Lower leg skin (tissue), 4 donors: ENCODE measurements at regions of chr5 and their contacts with region 1.

Region 1: GRCh38 chr5:11459716-11460115 is 444.5 kb downstream of the CTNND2 start:
- DNase-seq: no peak
- H3K4me3 ChIP-seq: no peak overlapping the region
- CTCF ChIP-seq: no peak
- POLR2A ChIP-seq: no peak

Region 2: GRCh38 chr5:9498541-9499497 is 1960.9 kb before region 1 on chr5:
- intact Hi-C with region 1: no loop called
- DNase-seq: peak; percentile 47 to 62
- H3K4me3 ChIP-seq: no peak overlapping the region
- CTCF ChIP-seq: no peak
- POLR2A ChIP-seq: no peak

Region 3: DNA sequence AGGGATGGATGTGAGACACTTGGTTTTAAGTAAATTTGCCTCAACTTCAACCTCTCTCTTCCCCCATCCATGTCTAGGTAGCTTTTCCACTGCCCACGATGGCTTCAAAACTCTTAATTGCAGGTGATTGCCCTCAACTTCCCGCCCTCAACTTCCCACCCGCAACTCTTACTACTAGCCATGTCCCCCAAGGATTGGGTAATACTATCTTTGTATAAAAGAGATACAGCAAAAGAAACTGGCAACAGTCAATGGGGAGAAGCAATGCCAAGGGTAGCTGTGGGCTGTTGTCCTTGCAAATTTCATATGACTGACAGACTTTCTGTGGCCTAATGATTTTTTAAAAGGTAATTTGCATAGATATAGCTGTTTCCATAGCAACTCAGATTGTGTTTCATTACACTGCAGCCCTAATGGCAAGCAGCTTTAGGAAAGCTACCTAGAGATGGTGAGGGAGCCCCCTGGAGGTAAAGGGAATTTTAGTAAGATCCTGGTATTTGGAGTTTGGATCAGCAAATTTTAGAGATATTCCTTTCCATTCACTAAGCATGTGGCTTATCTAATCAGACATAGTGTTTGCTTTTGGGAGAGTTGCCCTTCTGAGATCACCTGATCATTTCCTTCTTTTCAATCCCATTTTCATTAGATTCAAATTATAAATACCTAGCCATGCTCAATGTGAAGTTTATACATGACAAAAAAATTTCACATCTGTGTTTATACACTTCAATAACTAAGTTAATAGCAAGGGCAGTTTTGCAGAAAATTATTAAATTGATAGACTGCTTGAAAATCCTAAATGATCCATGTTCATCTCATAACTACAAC is 277.1 kb before region 1 on chr5:
- intact Hi-C with region 1: no loop called
- DNase-seq: no peak
- H3K4me3 ChIP-seq: no peak overlapping the region
- CTCF ChIP-seq: no peak
- POLR2A ChIP-seq: no peak

Region 4: DNA sequence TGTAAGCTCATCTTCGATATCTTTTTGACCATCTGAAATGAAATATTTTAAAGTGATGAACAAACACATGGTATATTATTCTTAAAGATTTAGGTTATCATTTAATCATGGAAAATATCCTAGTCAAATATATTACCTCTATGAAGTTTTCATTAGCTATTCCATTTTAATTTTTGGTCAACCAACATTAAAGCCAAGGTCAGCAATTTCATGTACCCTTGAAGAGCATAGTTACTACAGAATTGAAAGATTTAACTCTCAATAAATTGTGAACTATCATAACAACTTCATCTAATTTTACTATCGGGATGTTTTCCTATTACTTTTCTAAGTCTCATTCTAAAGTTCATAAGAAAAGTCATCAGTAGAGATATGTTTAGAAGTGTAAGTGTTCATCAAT is 48.1 kb before region 1 on chr5:
- intact Hi-C with region 1: loop called (anchors 2 kb)
- DNase-seq: no peak
- H3K4me3 ChIP-seq: no peak overlapping the region
- CTCF ChIP-seq: no peak
- POLR2A ChIP-seq: no peak

Region 5: DNA sequence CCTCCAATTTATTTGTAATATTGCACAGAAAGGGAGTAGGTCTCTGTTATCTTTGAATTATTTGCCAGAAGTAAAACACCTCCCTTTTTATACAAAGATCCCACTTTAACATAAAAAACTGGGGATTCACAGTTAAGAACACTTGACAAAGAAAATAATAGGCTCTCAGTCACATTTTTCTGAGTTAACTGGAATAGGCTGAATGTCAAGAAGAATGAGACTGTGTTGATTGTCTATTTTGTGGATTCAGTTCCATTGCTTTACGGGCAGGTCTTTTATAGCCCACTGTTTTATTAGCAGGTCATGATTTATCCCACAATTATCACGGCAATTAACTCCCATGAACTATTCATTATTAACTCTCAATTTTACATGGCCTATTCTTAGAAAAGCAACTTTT is 17.1 kb after region 1 on chr5:
- intact Hi-C with region 1: loop called (anchors 1 kb)
- DNase-seq: no peak
- H3K4me3 ChIP-seq: no peak overlapping the region
- CTCF ChIP-seq: no peak
- POLR2A ChIP-seq: no peak

Region 6: DNA sequence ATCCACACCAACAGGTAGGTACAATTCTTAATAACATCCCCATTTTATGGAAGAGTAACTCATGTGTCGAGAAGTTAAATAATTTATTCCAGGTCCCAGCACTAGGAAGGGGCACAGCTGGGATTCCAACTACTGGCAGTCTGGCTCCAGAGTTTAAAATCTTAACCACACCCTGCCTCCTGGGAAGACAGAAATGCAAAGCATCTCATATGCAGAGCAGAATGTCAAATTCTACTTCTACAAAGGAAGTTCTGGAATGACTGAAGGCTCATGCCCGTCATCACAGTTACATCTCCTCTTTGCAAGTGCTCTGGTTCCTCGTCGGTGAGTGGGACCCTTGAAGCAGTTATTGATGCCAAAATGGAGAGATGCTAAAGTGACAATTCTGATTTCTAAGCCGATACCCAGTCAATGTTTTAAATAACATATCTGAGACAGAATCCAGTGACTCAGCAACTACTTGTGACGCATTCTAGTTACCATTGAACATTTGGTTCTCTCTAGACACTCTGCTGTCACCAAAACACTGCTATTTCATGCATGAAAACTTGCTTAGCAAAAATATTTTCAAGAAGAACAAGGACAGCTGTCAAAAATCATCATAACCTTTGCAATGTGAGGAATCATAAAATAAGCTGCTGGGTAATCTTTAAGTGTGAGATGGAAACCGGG is 31.8 kb after region 1 on chr5:
- intact Hi-C with region 1: no loop called
- DNase-seq: no peak
- H3K4me3 ChIP-seq: no peak overlapping the region
- CTCF ChIP-seq: no peak
- POLR2A ChIP-seq: no peak

Region 7: GRCh38 chr5:11709006-11709405 is 249.3 kb after region 1 on chr5:
- intact Hi-C with region 1: loop called (anchors 5 kb)
- DNase-seq: no peak
- H3K4me3 ChIP-seq: no peak overlapping the region
- CTCF ChIP-seq: no peak
- POLR2A ChIP-seq: no peak